Right ventricle myocardium superior (tissue), 1 donor: ENCODE measurements at regions of chr4 and their contacts with region 1.

Region 1: GRCh38 chr4:153127760-153128494 is 76.3 kb upstream of the TRIM2 start:
- DNase-seq: peak; percentile 83
- ATAC-seq: peak; percentile 94

Region 2: GRCh38 chr4:152849350-152849749 is 278.6 kb before region 1 on chr4:
- intact Hi-C with region 1: loop called (anchors 2 kb)
- DNase-seq: no peak
- ATAC-seq: no peak

Region 3: DNA sequence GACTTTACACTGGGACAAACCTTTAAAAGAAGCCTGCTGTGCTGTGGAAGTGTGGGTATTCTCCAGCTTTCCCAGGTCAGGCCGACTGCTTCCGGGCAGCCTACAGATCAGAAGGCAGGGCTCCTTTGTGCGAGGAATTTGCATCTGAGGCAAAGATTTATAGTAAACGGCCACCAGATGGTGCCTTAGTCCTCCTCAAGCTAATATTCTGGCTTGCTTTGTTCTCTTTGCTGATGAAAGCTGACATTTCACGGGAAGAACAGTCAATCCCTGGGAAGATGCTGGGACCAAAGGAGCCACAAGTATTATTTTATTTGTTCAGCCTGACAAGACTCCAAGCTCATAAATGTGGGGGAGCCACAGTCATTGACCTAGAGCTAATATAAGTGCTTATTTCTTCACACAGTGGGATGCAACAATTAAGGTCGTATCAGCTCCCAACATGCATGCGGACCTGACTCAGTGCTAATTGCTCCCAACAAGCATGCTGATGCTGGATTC is 44.4 kb before region 1 on chr4:
- intact Hi-C with region 1: loop called (anchors 5 kb)
- DNase-seq: no peak
- ATAC-seq: peak; percentile 90